Activated CD4-positive, alpha-beta T cell treated with anti-CD3 and anti-CD28 coated beads for 36 hours (primary cell): ENCODE measurements at regions of chr19 and their contacts with region 1.

Region 1: GRCh38 chr19:1074544-1075283 is 7.7 kb downstream of the ARHGAP45 start:
- DNase-seq: peak; percentile 93
- ATAC-seq: peak; percentile 22
- H3K4me3 Mint-ChIP-seq: peak overlapping the region; percentile 52
- H3K27ac Mint-ChIP-seq: peak overlapping the region; percentile 84
- H3K4me1 Mint-ChIP-seq: peaks cover 63% of the 10 kb centered on the region
- H3K27me3 Mint-ChIP-seq: no peaks in the 10 kb centered on the region

Region 2: DNA sequence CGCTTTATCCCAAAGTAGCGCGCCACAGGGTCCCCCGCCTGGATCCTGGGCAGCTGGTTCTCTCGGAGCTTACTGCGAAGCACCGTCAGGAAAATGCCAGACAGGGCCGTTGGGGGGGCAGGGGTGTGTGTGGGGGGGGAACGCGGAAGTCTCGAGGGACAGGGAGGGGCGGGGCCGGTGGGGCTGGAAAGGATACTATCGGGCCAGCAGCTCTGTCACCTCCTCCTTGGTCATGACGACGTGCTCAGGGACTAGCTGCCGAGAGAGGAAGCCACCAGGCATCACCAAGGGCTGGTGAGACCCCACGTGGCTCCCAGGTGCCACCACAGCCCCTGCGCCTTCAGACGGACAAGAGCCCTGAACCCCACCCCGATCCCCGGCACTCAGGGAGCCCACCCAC is 15.2 kb after region 1 on chr19:
- CTCF ChIA-PET with region 1: interaction called, 5 read pairs
- POLR2A ChIA-PET with region 1: no interaction called
- intact Hi-C with region 1: loop called in 1 of 2 experiments (anchors 1 kb)
- DNase-seq: no peak
- ATAC-seq: no peak
- H3K4me3 Mint-ChIP-seq: no peak overlapping the region
- H3K27ac Mint-ChIP-seq: no peak overlapping the region
- H3K4me1 Mint-ChIP-seq: peaks cover 45% of the 10 kb centered on the region
- H3K27me3 Mint-ChIP-seq: no peaks in the 10 kb centered on the region

Region 3: GRCh38 chr19:1223018-1223855 is 148.5 kb after region 1 on chr19:
- CTCF ChIA-PET with region 1: no interaction called
- POLR2A ChIA-PET with region 1: no interaction called
- intact Hi-C with region 1: no loop called
- DNase-seq: peak; percentile 69
- ATAC-seq: peak; percentile 56
- H3K4me3 Mint-ChIP-seq: no peak overlapping the region
- H3K27ac Mint-ChIP-seq: no peak overlapping the region
- H3K4me1 Mint-ChIP-seq: no peaks in the 10 kb centered on the region
- H3K27me3 Mint-ChIP-seq: no peaks in the 10 kb centered on the region